Activated CD4-positive, alpha-beta T cell treated with anti-CD3 and anti-CD28 coated beads, Interleukin-2, amount 10 ng/mL, durations not matched to agents 7 days and 5 days (primary cell): ENCODE measurements at regions of chr2 and their contacts with region 1.

Region 1: DNA sequence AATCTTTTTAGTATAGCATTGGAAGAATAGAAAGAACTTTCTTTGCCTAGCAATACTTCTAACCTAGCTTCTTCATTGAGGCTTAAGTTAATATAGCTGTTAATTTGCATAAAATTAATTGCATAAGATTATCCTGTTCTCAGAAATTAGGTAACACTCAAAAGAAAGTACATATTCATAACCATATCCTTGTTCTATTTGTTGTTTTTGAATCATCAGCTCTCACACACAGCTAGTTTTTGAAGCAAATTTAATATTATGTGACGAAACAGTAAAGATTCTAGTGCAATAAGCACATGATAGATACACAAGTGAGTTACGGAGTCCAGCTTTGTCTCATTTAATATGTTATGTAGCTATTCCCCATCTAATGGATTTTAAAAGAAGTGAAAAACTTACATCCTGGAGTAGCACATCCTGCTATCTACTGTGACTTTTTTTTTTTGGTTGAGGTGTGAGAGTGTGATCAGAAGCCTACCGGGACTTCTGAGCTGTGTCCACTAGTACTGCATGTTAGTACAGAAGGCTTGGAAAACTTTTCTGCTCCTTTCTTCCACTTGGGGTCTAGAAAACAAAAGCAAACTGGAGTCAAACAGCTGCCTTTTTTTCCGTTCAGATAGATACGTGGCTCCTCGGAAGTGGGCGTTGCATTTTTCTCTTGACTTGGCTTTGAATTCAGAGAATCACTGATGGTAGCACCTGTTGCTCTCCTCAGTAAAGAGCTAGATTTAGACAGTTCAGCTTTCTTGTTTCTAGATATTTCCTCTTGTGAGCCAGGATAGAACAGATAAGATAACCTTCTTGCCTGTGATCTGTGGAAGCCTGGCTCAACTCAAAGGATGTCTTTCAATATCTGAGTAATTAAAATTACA is 27.2 kb downstream of the KDM3A start:
- DNase-seq: peak; percentile 27
- H3K4me3 Mint-ChIP-seq: peak overlapping the region; percentile 45
- H3K27ac Mint-ChIP-seq: peak overlapping the region; percentile 85
- H3K4me1 Mint-ChIP-seq: peaks cover 45% of the 10 kb centered on the region
- H3K27me3 Mint-ChIP-seq: no peaks in the 10 kb centered on the region

Region 2: DNA sequence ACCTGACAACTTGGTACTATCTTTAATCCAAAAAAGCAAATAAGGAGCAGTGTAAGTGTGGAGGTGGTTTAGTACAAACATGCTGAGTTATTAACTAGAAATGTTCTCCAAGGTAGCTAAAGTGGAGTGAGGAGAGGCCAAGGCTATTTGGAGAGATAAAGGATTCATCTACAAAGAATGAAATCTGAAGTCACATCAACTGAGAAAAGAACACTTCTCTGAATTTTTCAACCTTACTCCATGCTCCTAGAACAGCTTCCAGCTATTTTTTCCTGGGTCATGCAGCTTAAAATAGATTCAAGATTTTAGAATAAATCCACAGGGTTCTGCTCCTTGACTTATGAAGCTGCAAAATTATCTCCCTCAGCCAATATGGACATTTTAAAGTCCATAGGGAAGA is 291.8 kb before region 1 on chr2:
- CTCF ChIA-PET with region 1: no interaction called
- POLR2A ChIA-PET with region 1: no interaction called
- DNase-seq: no peak
- H3K4me3 Mint-ChIP-seq: no peak overlapping the region
- H3K27ac Mint-ChIP-seq: no peak overlapping the region
- H3K4me1 Mint-ChIP-seq: peaks cover 24% of the 10 kb centered on the region
- H3K27me3 Mint-ChIP-seq: no peaks in the 10 kb centered on the region

Region 3: DNA sequence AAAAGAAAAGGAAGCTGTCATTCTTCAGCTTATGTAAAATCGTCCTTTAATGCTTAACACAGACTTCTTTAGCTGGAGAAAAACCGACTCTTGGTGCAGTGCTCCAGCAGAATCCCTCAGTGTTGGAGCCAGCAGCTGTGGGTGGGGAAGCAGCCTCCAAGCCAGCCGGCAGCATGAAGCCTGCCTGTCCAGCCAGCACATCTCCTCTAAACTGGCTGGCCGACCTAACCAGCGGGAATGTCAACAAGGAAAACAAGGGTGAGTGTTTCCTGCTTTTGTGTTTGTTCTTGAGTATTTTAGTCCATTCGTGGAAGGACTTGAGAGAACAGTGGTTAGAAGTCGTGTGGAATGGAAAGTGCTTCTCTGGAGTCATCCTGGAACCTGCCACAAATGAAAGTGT is 11.7 kb after region 1 on chr2:
- CTCF ChIA-PET with region 1: interaction called, 16 read pairs
- POLR2A ChIA-PET with region 1: no interaction called
- DNase-seq: no peak
- H3K4me3 Mint-ChIP-seq: no peak overlapping the region
- H3K27ac Mint-ChIP-seq: no peak overlapping the region
- H3K4me1 Mint-ChIP-seq: peaks cover 38% of the 10 kb centered on the region
- H3K27me3 Mint-ChIP-seq: no peaks in the 10 kb centered on the region

Region 4: GRCh38 chr2:86512034-86512433 is 43.6 kb after region 1 on chr2:
- CTCF ChIA-PET with region 1: no interaction called
- POLR2A ChIA-PET with region 1: no interaction called
- DNase-seq: no peak
- H3K4me3 Mint-ChIP-seq: no peak overlapping the region
- H3K27ac Mint-ChIP-seq: no peak overlapping the region
- H3K4me1 Mint-ChIP-seq: no peaks in the 10 kb centered on the region
- H3K27me3 Mint-ChIP-seq: no peaks in the 10 kb centered on the region